H1 (cell line): ENCODE measurements at regions of chr2 and their contacts with region 1.

Region 1: GRCh38 chr2:170361090-170361936 is 183.4 kb downstream of the MYO3B start:
- DNase-seq: peak; percentile 21 to 69
- H3K4me3 ChIP-seq: no peak overlapping the region
- H3K27ac ChIP-seq: no peak overlapping the region
- H3K4me1 ChIP-seq: peaks cover 0 to 7% (median 2%) of the 10 kb centered on the region in 4 experiments; a peak in 3 of 7 replicates
- H3K27me3 ChIP-seq: no peaks in the 10 kb centered on the region
- CTCF ChIP-seq: peak; percentile 32 to 85 (median 72)
- EP300 ChIP-seq: no peak
- POLR2A ChIP-seq: no peak
- RAD21 ChIP-seq: peak; percentile 74 to 84

Region 2: DNA sequence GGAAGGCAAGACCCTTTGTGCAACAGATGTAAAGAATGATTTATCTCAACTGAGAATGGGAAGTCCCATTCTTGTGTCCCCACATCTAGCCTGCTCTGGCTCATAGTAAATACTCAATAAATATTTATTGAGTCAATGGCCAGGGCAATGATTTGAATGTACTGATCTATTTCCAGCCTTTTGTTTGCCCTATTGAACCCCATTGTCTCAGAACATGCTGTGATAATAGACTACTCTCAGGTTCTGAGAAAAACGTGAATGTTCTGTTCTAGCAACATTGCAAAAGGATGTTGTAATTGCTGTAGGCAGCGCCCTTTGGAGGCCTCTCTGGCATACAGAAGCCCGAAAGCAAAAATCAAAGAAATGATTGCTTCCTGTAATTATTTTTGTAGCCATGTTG is 53.3 kb before region 1 on chr2:
- CTCF ChIA-PET with region 1: no interaction called
- POLR2A ChIA-PET with region 1: no interaction called
- DNase-seq: no peak
- H3K4me3 ChIP-seq: no peak overlapping the region
- H3K27ac ChIP-seq: no peak overlapping the region
- H3K4me1 ChIP-seq: no peaks in the 10 kb centered on the region; a peak in 1 of 7 replicates
- H3K27me3 ChIP-seq: peaks cover 0 to 1% (median 0%) of the 10 kb centered on the region in 4 experiments; a peak in 1 of 7 replicates
- CTCF ChIP-seq: no peak
- EP300 ChIP-seq: no peak
- POLR2A ChIP-seq: no peak
- RAD21 ChIP-seq: no peak

Region 3: GRCh38 chr2:170341684-170342623 is 19.4 kb before region 1 on chr2:
- CTCF ChIA-PET with region 1: interaction called, 16 read pairs
- POLR2A ChIA-PET with region 1: no interaction called
- DNase-seq: no peak
- H3K4me3 ChIP-seq: no peak overlapping the region
- H3K27ac ChIP-seq: no peak overlapping the region
- H3K4me1 ChIP-seq: peaks cover 0 to 13% (median 8%) of the 10 kb centered on the region in 4 experiments; a peak in 4 of 7 replicates
- H3K27me3 ChIP-seq: no peaks in the 10 kb centered on the region
- CTCF ChIP-seq: no peak
- EP300 ChIP-seq: no peak
- POLR2A ChIP-seq: no peak
- RAD21 ChIP-seq: no peak

Region 4: DNA sequence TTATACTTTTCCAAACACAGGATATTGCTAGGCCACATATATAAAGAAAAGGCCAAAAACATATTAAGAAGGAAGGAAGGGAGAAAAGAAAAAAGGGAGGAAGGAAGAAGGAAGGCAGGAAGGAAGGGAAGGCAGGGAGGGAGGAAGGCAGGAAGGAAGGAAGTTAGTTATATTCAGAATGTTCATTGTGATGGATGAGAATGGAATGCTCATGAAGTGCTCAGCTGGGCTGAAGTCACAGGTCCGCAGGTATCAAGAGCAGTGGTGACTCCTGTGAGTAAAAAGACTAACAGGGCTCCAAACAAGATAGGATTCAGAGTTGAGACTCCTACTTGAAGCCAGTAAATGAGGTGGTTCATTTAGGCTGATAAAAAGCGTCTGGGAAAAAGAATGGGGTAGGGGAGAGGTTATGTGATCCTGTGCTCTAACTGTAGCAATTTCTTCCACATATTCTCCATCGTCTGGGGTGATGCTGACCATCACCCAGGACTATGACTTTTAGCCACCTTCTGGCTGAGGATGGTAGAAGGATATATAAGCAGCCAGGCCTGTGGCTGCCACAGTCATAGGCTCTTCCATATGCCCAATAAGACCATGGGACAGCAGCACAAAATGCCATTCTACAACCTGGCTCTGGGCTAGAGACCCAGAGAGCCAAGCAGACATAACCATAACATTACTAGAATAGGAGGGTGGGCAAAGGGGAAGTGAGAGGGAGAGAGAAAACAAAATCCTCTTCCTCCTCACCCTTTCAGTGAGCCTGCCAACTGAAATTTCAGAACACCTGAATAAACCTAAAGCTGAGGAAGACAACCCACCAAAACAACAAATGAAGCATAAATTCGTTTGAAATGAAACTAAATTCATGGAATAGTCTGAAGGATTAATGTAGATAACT is 10.1 kb before region 1 on chr2:
- CTCF ChIA-PET with region 1: interaction called, 14 read pairs
- POLR2A ChIA-PET with region 1: no interaction called
- DNase-seq: no peak
- H3K4me3 ChIP-seq: no peak overlapping the region
- H3K27ac ChIP-seq: no peak overlapping the region
- H3K4me1 ChIP-seq: peaks cover 0 to 13% (median 9%) of the 10 kb centered on the region in 4 experiments; a peak in 3 of 7 replicates
- H3K27me3 ChIP-seq: no peaks in the 10 kb centered on the region
- CTCF ChIP-seq: peak in 1 of 3 experiments; percentile 2; a peak in 1 of 4 replicates
- EP300 ChIP-seq: no peak
- POLR2A ChIP-seq: no peak
- RAD21 ChIP-seq: no peak; a peak in 1 of 4 replicates

Region 5: DNA sequence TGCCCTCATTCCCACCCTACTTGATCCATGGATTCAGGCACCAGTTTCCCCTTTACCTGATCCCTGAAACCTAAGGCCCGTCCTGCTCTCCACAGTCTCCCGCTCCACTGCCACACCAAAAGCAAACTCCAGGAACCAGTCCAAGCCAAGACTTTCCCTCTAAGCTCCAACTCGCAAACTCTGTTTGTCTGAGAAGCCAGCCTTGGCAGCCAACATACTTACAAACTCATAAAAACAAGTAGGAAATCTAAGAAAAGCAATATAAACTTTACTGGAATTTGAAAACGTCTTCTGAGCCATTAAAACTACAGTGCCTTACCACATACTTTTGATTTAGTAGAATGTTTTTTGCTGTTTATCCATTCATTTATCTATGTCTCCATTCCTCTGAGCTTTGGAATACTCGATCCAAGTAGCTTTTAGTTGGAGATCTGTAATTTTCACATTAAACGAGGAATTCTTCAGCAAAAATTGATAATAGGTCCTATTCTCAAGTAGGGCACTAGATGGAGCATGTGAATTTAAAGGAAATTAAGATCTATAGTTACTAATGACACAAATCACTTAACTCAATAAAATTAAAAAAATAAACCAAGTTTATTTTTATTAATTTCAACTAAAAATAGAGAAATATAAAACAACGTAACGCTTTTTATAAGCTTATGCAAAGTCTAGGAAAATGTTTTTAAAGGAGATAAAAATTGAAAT is 16.3 kb after region 1 on chr2:
- CTCF ChIA-PET with region 1: interaction called, 11 read pairs
- POLR2A ChIA-PET with region 1: no interaction called
- DNase-seq: no peak
- H3K4me3 ChIP-seq: no peak overlapping the region
- H3K27ac ChIP-seq: no peak overlapping the region
- H3K4me1 ChIP-seq: 0 out of 7 replicates have a peak, but pooled peaks cover 0 to 2% (median 0%) of the 10 kb centered on the region in 4 experiments
- H3K27me3 ChIP-seq: no peaks in the 10 kb centered on the region; a peak in 2 of 7 replicates
- CTCF ChIP-seq: no peak
- EP300 ChIP-seq: no peak
- POLR2A ChIP-seq: no peak
- RAD21 ChIP-seq: no peak

Region 6: GRCh38 chr2:170396799-170397459 is 35.6 kb after region 1 on chr2:
- CTCF ChIA-PET with region 1: interaction called, 15 read pairs
- POLR2A ChIA-PET with region 1: no interaction called
- DNase-seq: no peak
- H3K4me3 ChIP-seq: no peak overlapping the region
- H3K27ac ChIP-seq: no peak overlapping the region
- H3K4me1 ChIP-seq: no peaks in the 10 kb centered on the region
- H3K27me3 ChIP-seq: no peaks in the 10 kb centered on the region
- CTCF ChIP-seq: peak in 2 of 3 experiments; percentile 5 to 22; a peak in 2 of 4 replicates
- EP300 ChIP-seq: no peak
- POLR2A ChIP-seq: no peak
- RAD21 ChIP-seq: peak; percentile 40 to 48